ENCODE measurements at regions of chr12 and their contacts with region 1.

Region 1: GRCh38 chr12:71636704-71637115 is 26.9 kb downstream of the ZFC3H1 start:
- DNase-seq: no peak
- ATAC-seq: peak; percentile 57
- H3K4me3 Mint-ChIP-seq: no peak overlapping the region
- H3K27ac Mint-ChIP-seq: peak overlapping the region; percentile 19
- H3K4me1 Mint-ChIP-seq: peaks cover 5% of the 10 kb centered on the region
- H3K27me3 Mint-ChIP-seq: no peaks in the 10 kb centered on the region
- CTCF ChIP-seq: peak; percentile 66

Region 2: DNA sequence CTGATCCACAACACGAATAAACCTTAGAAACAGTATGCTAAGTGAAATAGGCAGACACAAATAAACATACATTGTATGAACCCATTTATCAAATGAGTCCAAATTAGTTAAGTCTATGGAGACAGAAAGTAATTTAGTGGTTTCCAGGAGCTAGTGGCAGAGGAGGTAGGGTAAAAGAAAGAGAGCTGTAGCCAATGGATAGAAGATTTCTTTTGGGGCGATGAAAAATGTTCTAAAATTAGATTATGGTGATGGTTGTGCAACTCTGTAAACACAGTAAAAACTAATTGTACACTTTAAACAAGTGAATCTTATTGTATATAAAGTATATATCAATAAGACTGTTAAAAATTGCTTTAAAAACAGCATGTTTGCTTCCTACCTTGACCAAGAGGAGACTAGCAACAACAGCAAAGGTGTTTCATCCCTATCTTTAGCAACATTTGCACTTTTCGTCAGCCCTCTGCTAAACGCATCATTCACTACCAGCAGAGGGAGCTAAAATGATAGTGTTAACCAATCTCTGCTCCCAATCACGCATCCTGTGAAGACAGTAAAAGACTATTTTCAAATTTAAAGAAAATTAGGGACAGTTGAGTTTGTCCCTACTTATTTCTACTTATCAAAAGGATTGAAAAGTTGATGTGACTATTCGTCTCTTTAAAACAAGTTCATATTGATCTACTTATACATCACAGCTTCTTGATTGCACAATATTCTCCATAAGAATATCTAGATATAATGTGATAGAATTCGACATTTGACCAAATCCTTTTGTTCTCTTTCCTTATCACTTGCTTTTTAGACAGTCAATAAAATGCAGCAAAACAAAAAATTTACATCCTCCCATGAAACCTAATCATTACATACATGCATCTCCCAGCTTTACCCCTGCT is 221.1 kb before region 1 on chr12:
- CTCF ChIA-PET with region 1: interaction called, 16 read pairs
- POLR2A ChIA-PET with region 1: no interaction called
- intact Hi-C with region 1: loop called (anchors 1 kb)
- DNase-seq: no peak
- ATAC-seq: peak; percentile 54
- H3K4me3 Mint-ChIP-seq: no peak overlapping the region
- H3K27ac Mint-ChIP-seq: no peak overlapping the region
- H3K4me1 Mint-ChIP-seq: no peaks in the 10 kb centered on the region
- H3K27me3 Mint-ChIP-seq: no peaks in the 10 kb centered on the region
- CTCF ChIP-seq: no peak

Region 3: DNA sequence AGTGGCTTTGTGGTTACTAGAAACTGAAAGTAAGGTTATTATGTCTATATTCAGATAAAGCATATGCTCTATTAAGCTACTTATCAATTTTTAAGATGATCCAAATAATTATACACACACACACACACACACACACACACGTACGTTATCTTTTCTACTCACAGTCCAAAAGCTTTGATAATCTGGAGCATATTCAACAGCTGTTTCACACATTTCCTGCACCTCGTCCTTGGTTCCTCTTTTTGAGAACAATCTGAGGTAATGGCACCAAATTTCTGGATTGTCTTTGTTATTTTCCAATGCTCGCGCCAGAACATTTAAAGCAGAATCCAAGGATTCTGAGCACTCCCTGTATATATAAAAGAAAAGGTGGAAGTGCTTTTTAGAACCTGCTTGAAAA is 10.6 kb before region 1 on chr12:
- CTCF ChIA-PET with region 1: interaction called, 12 read pairs
- POLR2A ChIA-PET with region 1: interaction called, 3 read pairs
- intact Hi-C with region 1: loop called (anchors 1 kb)
- DNase-seq: no peak
- ATAC-seq: peak; percentile 58
- H3K4me3 Mint-ChIP-seq: no peak overlapping the region
- H3K27ac Mint-ChIP-seq: peak overlapping the region; percentile 67
- H3K4me1 Mint-ChIP-seq: peaks cover 21% of the 10 kb centered on the region
- H3K27me3 Mint-ChIP-seq: no peaks in the 10 kb centered on the region
- CTCF ChIP-seq: no peak

Region 4: GRCh38 chr12:71694099-71694820 is 57.5 kb after region 1 on chr12:
- CTCF ChIA-PET with region 1: interaction called, 13 read pairs
- POLR2A ChIA-PET with region 1: interaction called, 8 read pairs
- intact Hi-C with region 1: loop called (anchors 1 kb)
- DNase-seq: no peak
- ATAC-seq: peak; percentile 83
- H3K4me3 Mint-ChIP-seq: peak overlapping the region; percentile 76
- H3K27ac Mint-ChIP-seq: peak overlapping the region; percentile 97
- H3K4me1 Mint-ChIP-seq: peaks cover 77% of the 10 kb centered on the region
- H3K27me3 Mint-ChIP-seq: no peaks in the 10 kb centered on the region
- CTCF ChIP-seq: no peak

Region 5: DNA sequence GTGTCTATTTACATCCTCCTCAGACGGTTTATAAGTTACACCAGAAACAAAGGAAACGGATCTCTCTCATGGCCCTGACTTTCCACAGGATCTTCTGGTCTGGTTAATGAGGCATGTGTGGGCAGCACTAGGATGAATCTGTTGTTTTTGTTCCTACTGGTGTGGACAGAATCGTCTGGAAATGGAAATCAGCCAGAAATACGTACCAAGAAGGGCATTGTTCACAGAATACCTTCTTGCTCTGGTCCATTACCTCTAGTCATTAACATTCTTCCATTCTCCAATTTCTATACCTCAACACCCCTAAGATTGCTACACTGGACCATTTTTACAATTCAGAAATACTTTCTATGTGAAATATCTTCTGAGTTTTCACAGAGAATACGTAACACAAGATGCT is 387.9 kb after region 1 on chr12:
- CTCF ChIA-PET with region 1: no interaction called
- POLR2A ChIA-PET with region 1: no interaction called
- intact Hi-C with region 1: no loop called
- DNase-seq: no peak
- ATAC-seq: no peak
- H3K4me3 Mint-ChIP-seq: no peak overlapping the region
- H3K27ac Mint-ChIP-seq: no peak overlapping the region
- H3K4me1 Mint-ChIP-seq: no peaks in the 10 kb centered on the region
- H3K27me3 Mint-ChIP-seq: peaks cover 6% of the 10 kb centered on the region
- CTCF ChIP-seq: no peak

Measured in activated B cell treated with CpG ODN at 0.5 μM for 24 hours (primary cell).